B cell (primary cell): ENCODE measurements at regions of chr6 and their contacts with region 1.

Region 1: GRCh38 chr6:132147530-132148011 is 196.4 kb upstream of the CCN2 start:
- DNase-seq: no peak
- ATAC-seq: no peak
- H3K4me3 ChIP-seq: no peak overlapping the region
- H3K4me3 Mint-ChIP-seq: no peak overlapping the region
- H3K27ac ChIP-seq: no peak overlapping the region
- H3K27ac Mint-ChIP-seq: no peak overlapping the region
- H3K4me1 ChIP-seq: peaks cover 4 to 6% of the 10 kb centered on the region in 2 donors
- H3K4me1 Mint-ChIP-seq: peaks cover 31% of the 10 kb centered on the region
- H3K27me3 ChIP-seq: no peaks in the 10 kb centered on the region
- H3K27me3 Mint-ChIP-seq: no peaks in the 10 kb centered on the region
- CTCF ChIP-seq: no peak

Region 2: GRCh38 chr6:132133736-132134445 is 13.7 kb before region 1 on chr6:
- CTCF ChIA-PET with region 1: no interaction called
- POLR2A ChIA-PET with region 1: no interaction called
- intact Hi-C with region 1: loop called (anchors 2 kb)
- DNase-seq: peak; percentile 60
- ATAC-seq: peak; percentile 39
- H3K4me3 ChIP-seq: peak overlapping the region; percentile 34 to 55 (median 48)
- H3K4me3 Mint-ChIP-seq: peak overlapping the region; percentile 80
- H3K27ac ChIP-seq: peak overlapping the region; percentile 77 to 91
- H3K27ac Mint-ChIP-seq: peak overlapping the region; percentile 78
- H3K4me1 ChIP-seq: peaks cover 83% of the 10 kb centered on the region in 2 donors
- H3K4me1 Mint-ChIP-seq: peaks cover 79% of the 10 kb centered on the region
- H3K27me3 ChIP-seq: no peaks in the 10 kb centered on the region
- H3K27me3 Mint-ChIP-seq: no peaks in the 10 kb centered on the region
- CTCF ChIP-seq: no peak